ENCODE measurements at regions of chr19 and their contacts with region 1.

Region 1: GRCh38 chr19:9827289-9828238 is at the start of gene UBL5:
- DNase-seq: peak; percentile 92
- H3K4me3 Mint-ChIP-seq: peak within 1 kb of the TSS; percentile 100
- H3K27ac Mint-ChIP-seq: peak within 1 kb of the TSS; percentile 99
- H3K4me1 Mint-ChIP-seq: peaks cover 32% of the 10 kb centered on the region
- H3K27me3 Mint-ChIP-seq: no peaks in the 10 kb centered on the region
- total RNA-seq, gene UBL5: 339 to 372 TPM

Region 2: GRCh38 chr19:9768175-9769112 is 59.1 kb before region 1 on chr19 and contains the start of gene ZNF846:
- CTCF ChIA-PET with region 1: interaction called, 5 read pairs
- POLR2A ChIA-PET with region 1: interaction called, 13 read pairs
- DNase-seq: peak; percentile 94
- H3K4me3 Mint-ChIP-seq: peak within 1 kb of the TSS; percentile 85
- H3K27ac Mint-ChIP-seq: peak within 1 kb of the TSS; percentile 88
- H3K4me1 Mint-ChIP-seq: peaks cover 13% of the 10 kb centered on the region
- H3K27me3 Mint-ChIP-seq: no peaks in the 10 kb centered on the region
- total RNA-seq, gene ZNF846: 6.5 to 6.7 TPM

Region 3: GRCh38 chr19:9857920-9858746 is 30.6 kb after region 1 on chr19:
- CTCF ChIA-PET with region 1: no interaction called
- POLR2A ChIA-PET with region 1: interaction called, 18 read pairs
- DNase-seq: peak; percentile 36
- H3K4me3 Mint-ChIP-seq: peak overlapping the region; percentile 77
- H3K27ac Mint-ChIP-seq: peak overlapping the region; percentile 95
- H3K4me1 Mint-ChIP-seq: peaks cover 65% of the 10 kb centered on the region
- H3K27me3 Mint-ChIP-seq: no peaks in the 10 kb centered on the region